B cell (primary cell): ENCODE measurements at regions of chr17 and their contacts with region 1.

Region 1: GRCh38 chr17:80287038-80287437 is 26.4 kb downstream of the RNF213 start:
- DNase-seq: no peak
- ATAC-seq: no peak
- H3K4me3 ChIP-seq: no peak overlapping the region
- H3K4me3 Mint-ChIP-seq: no peak overlapping the region
- H3K27ac ChIP-seq: no peak overlapping the region
- H3K27ac Mint-ChIP-seq: no peak overlapping the region
- H3K4me1 ChIP-seq: no peaks in the 10 kb centered on the region
- H3K4me1 Mint-ChIP-seq: peaks cover 5% of the 10 kb centered on the region
- H3K27me3 ChIP-seq: no peaks in the 10 kb centered on the region
- H3K27me3 Mint-ChIP-seq: no peaks in the 10 kb centered on the region
- CTCF ChIP-seq: no peak

Region 2: DNA sequence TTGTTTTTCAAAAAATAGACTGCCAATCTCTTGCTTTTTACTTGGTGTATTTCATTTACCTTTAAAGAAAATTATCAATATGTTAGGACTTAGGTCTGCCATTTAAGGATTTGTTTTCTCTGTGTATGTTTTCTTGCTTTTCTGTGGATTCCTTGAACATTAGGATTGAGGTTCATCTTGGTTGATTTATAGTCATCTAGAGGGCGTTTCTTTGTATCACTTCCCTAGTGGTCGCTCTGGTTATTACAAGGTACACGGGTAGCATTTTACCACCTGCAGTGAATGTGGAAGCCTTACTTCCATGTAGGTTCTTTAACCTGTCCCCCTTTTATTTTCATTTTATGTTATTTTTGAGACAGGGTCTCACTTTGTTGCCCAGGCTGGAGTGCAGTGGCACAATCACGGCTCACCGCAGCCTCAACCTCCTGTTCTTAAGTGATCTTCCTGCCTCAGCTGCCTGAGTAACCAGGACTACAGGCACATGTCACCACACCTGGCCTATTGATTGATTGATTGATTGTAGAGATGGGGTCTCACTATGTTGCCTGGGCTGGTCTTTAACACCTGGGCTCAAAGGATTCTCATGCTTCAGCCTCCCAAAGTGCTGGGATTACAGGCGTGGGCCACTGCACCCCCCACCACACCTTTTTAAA is 412.6 kb before region 1 on chr17:
- CTCF ChIA-PET with region 1: no interaction called
- POLR2A ChIA-PET with region 1: no interaction called
- intact Hi-C with region 1: no loop called
- DNase-seq: peak; percentile 67
- ATAC-seq: peak; percentile 66
- H3K4me3 ChIP-seq: no peak overlapping the region
- H3K4me3 Mint-ChIP-seq: no peak overlapping the region
- H3K27ac ChIP-seq: no peak overlapping the region
- H3K27ac Mint-ChIP-seq: no peak overlapping the region
- H3K4me1 ChIP-seq: no peaks in the 10 kb centered on the region
- H3K4me1 Mint-ChIP-seq: peaks cover 2% of the 10 kb centered on the region
- H3K27me3 ChIP-seq: peaks cover 0 to 9% (median 2%) of the 10 kb centered on the region in 4 experiments
- H3K27me3 Mint-ChIP-seq: peaks cover 32% of the 10 kb centered on the region
- CTCF ChIP-seq: peak; percentile 72

Region 3: DNA sequence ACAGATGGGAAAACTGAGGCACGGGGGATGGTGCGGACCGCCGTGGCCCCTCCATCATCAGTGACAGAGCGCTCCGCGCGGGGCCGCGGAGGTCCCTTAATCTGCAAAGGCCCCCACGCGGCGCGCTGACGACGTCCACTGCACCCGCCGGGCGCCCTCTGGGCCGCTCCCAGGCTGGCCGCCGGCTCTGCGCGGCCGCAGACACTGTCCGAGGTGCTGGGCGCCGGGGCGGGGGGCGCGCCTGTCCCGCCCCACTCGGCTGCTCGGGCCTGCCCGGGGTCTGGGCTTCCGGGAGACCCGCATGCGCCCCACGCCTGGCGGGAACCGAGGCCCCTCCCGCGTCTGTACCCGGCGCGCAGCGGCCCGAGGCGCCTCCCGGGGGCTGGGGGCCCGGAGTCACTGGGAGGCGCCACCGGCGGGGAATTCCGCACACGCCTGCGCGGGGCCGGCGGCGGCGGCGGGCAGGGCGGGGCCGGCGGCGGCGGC is 26.9 kb before region 1 on chr17:
- CTCF ChIA-PET with region 1: no interaction called
- POLR2A ChIA-PET with region 1: no interaction called
- intact Hi-C with region 1: no loop called
- DNase-seq: peak; percentile 88
- ATAC-seq: peak; percentile 65
- H3K4me3 ChIP-seq: peak overlapping the region; percentile 4 to 67 (median 48)
- H3K4me3 Mint-ChIP-seq: peak overlapping the region; percentile 88
- H3K27ac ChIP-seq: peak overlapping the region; percentile 70 to 86
- H3K27ac Mint-ChIP-seq: peak overlapping the region; percentile 93
- H3K4me1 ChIP-seq: peaks cover 27 to 45% of the 10 kb centered on the region in 2 donors
- H3K4me1 Mint-ChIP-seq: peaks cover 49% of the 10 kb centered on the region
- H3K27me3 ChIP-seq: no peaks in the 10 kb centered on the region
- H3K27me3 Mint-ChIP-seq: no peaks in the 10 kb centered on the region
- CTCF ChIP-seq: no peak

Region 4: GRCh38 chr17:80437532-80437931 is 150.5 kb after region 1 on chr17:
- CTCF ChIA-PET with region 1: no interaction called
- POLR2A ChIA-PET with region 1: interaction called, 11 read pairs
- intact Hi-C with region 1: no loop called
- DNase-seq: no peak
- ATAC-seq: no peak
- H3K4me3 ChIP-seq: no peak overlapping the region
- H3K4me3 Mint-ChIP-seq: no peak overlapping the region
- H3K27ac ChIP-seq: no peak overlapping the region
- H3K27ac Mint-ChIP-seq: no peak overlapping the region
- H3K4me1 ChIP-seq: no peaks in the 10 kb centered on the region
- H3K4me1 Mint-ChIP-seq: no peaks in the 10 kb centered on the region
- H3K27me3 ChIP-seq: peaks cover 0 to 2% (median 0%) of the 10 kb centered on the region in 4 experiments
- H3K27me3 Mint-ChIP-seq: peaks cover 5% of the 10 kb centered on the region
- CTCF ChIP-seq: no peak

Region 5: GRCh38 chr17:81207610-81208581 is 920.9 kb after region 1 on chr17:
- CTCF ChIA-PET with region 1: no interaction called
- POLR2A ChIA-PET with region 1: no interaction called
- intact Hi-C with region 1: no loop called
- DNase-seq: peak; percentile 46
- ATAC-seq: peak; percentile 51
- H3K4me3 ChIP-seq: no peak overlapping the region
- H3K4me3 Mint-ChIP-seq: no peak overlapping the region
- H3K27ac ChIP-seq: no peak overlapping the region
- H3K27ac Mint-ChIP-seq: peak overlapping the region; percentile 75
- H3K4me1 ChIP-seq: peaks cover 3% of the 10 kb centered on the region in 2 donors
- H3K4me1 Mint-ChIP-seq: peaks cover 9% of the 10 kb centered on the region
- H3K27me3 ChIP-seq: no peaks in the 10 kb centered on the region
- H3K27me3 Mint-ChIP-seq: no peaks in the 10 kb centered on the region
- CTCF ChIP-seq: no peak